HCT116 (cell line): ENCODE measurements at regions of chr15 and their contacts with region 1.

Region 1: DNA sequence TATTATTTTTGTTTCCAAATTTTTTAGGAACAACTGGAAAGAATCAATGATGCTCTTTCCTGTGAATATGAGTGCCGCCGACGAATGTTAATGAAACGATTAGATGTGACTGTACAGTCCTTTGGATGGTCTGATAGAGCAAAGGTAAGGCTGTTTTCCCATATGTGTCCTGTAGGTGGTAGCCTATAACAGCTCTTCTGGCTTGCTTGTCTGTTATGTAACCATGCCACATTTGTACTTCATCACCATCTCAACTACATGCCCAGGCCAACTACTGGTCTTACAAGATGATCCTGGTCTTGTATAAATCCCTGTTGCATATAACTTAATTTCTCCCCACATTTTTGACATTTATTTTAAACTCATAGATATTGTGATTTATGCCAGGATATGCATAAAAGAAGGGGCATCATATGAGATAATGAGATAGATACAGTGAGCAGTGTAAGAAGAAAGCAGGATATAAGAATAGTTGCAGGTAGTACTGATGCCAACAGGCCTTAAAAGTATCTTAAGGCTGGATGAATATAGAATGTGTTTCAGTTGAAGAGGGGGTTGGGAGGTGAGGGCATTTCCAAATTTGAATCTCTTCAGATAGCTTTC is 20.3 kb downstream of the FAM98B start:
- DNase-seq: peak; percentile 29
- ATAC-seq: peak; percentile 90
- H3K4me3 ChIP-seq: no peak overlapping the region
- H3K27ac ChIP-seq: no peak overlapping the region
- H3K4me1 ChIP-seq: no peaks in the 10 kb centered on the region
- H3K27me3 ChIP-seq: no peaks in the 10 kb centered on the region
- CTCF ChIP-seq: peak; percentile 30 to 63 (median 61); a peak in 5 of 6 replicates
- POLR2A ChIP-seq: no peak
- RAD21 ChIP-seq: peak; percentile 56

Region 2: GRCh38 chr15:38176155-38176554 is 298.1 kb before region 1 on chr15:
- CTCF ChIA-PET with region 1: no interaction called
- POLR2A ChIA-PET with region 1: no interaction called
- RAD21 ChIA-PET with region 1: no interaction called
- intact Hi-C with region 1: no loop called
- DNase-seq: no peak
- ATAC-seq: no peak
- H3K4me3 ChIP-seq: no peak overlapping the region
- H3K27ac ChIP-seq: no peak overlapping the region
- H3K4me1 ChIP-seq: no peaks in the 10 kb centered on the region
- H3K27me3 ChIP-seq: peaks cover 14% of the 10 kb centered on the region
- CTCF ChIP-seq: no peak
- POLR2A ChIP-seq: no peak
- RAD21 ChIP-seq: no peak

Region 3: GRCh38 chr15:38683382-38684242 is 209.4 kb after region 1 on chr15:
- CTCF ChIA-PET with region 1: no interaction called
- POLR2A ChIA-PET with region 1: no interaction called
- RAD21 ChIA-PET with region 1: no interaction called
- intact Hi-C with region 1: loop called (anchors 2 kb)
- DNase-seq: peak; percentile 27
- ATAC-seq: peak; percentile 95
- H3K4me3 ChIP-seq: no peak overlapping the region
- H3K27ac ChIP-seq: no peak overlapping the region
- H3K4me1 ChIP-seq: peaks cover 0 to 3% of the 10 kb centered on the region in 2 experiments; a peak in 1 of 4 replicates
- H3K27me3 ChIP-seq: no peaks in the 10 kb centered on the region
- CTCF ChIP-seq: peak; percentile 53 to 77 (median 69); a peak in 5 of 6 replicates
- POLR2A ChIP-seq: no peak
- RAD21 ChIP-seq: peak; percentile 68

Region 4: GRCh38 chr15:38690689-38691332 is 216.6 kb after region 1 on chr15:
- CTCF ChIA-PET with region 1: interaction called, 4 read pairs
- POLR2A ChIA-PET with region 1: no interaction called
- RAD21 ChIA-PET with region 1: interaction called in 1 of 2 experiments, 3 read pairs
- intact Hi-C with region 1: loop called (anchors 1 kb)
- DNase-seq: peak; percentile 61
- ATAC-seq: peak; percentile 82
- H3K4me3 ChIP-seq: no peak overlapping the region
- H3K27ac ChIP-seq: no peak overlapping the region
- H3K4me1 ChIP-seq: peaks cover 0 to 10% of the 10 kb centered on the region in 2 experiments; a peak in 1 of 4 replicates
- H3K27me3 ChIP-seq: no peaks in the 10 kb centered on the region
- CTCF ChIP-seq: peak; percentile 27 to 88 (median 82); a peak in 5 of 6 replicates
- POLR2A ChIP-seq: no peak
- RAD21 ChIP-seq: peak; percentile 43